ENCODE measurements at regions of chr17 and their contacts with region 1.

Region 1: GRCh38 chr17:46995841-46996571 is 17.0 kb upstream of the RPRML start:
- DNase-seq: no peak
- H3K4me3 ChIP-seq: no peak overlapping the region
- H3K27ac ChIP-seq: no peak overlapping the region
- H3K4me1 ChIP-seq: no peaks in the 10 kb centered on the region; a peak in 1 of 4 replicates
- H3K27me3 ChIP-seq: no peaks in the 10 kb centered on the region
- CTCF ChIP-seq: no peak
- EP300 ChIP-seq: no peak
- RAD21 ChIP-seq: no peak

Region 2: GRCh38 chr17:46949291-46950174 is 46.5 kb before region 1 on chr17:
- CTCF ChIA-PET with region 1: interaction called, 278 read pairs
- POLR2A ChIA-PET with region 1: no interaction called
- DNase-seq: no peak
- H3K4me3 ChIP-seq: no peak overlapping the region
- H3K27ac ChIP-seq: no peak overlapping the region
- H3K4me1 ChIP-seq: peaks cover under 1 to 21% of the 10 kb centered on the region in 2 experiments; a peak in 2 of 4 replicates
- H3K27me3 ChIP-seq: no peaks in the 10 kb centered on the region
- CTCF ChIP-seq: no peak
- EP300 ChIP-seq: no peak
- RAD21 ChIP-seq: no peak

Region 3: DNA sequence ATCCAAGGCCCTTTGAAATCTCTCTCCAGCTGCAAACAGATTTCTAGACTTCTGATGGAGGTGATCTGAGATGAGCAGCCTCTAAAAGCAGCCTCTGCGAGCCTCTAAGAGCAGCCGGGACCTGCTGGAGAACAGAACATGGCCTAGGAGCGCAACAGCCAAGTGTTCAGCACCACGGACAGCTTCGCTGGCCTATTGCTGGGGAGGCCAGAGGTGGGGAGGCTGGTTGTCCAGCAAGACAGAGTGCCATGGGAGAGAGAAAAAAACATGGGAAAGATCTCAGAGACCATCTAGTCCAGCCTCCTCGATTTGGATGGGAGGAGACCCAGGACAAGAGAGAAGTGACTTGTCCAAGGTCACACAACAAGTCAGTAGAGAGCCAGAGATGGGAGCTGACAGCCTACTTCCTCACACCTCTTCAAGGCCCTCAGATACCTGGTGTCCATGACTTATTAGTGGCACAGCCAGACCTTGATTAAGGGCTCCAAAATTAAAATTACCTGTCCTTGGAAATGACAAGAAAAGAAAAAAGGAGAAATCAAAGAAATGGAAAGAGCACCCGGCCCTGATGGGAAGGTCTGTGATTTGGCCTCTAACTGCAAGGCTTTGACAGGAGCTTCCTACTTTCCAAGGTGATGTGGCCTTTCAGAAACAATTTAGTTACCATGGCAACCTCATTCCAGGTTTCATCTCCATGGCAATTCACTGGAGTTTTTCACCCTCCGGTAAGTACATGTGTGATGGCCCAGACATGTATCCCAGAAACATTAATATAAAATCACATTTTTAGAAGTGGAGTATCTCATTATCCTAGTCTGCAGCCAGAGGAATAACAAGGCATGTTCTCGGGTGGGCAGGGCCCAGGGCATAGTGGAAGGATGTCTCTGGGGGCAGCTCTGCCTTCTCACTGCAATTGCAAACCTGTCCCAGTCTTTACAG is 31.4 kb before region 1 on chr17:
- CTCF ChIA-PET with region 1: interaction called, 11 read pairs
- POLR2A ChIA-PET with region 1: no interaction called
- DNase-seq: no peak
- H3K4me3 ChIP-seq: no peak overlapping the region
- H3K27ac ChIP-seq: no peak overlapping the region
- H3K4me1 ChIP-seq: peaks cover 0 to 2% of the 10 kb centered on the region in 2 experiments; a peak in 1 of 4 replicates
- H3K27me3 ChIP-seq: no peaks in the 10 kb centered on the region
- CTCF ChIP-seq: no peak
- EP300 ChIP-seq: no peak
- RAD21 ChIP-seq: no peak

Region 4: DNA sequence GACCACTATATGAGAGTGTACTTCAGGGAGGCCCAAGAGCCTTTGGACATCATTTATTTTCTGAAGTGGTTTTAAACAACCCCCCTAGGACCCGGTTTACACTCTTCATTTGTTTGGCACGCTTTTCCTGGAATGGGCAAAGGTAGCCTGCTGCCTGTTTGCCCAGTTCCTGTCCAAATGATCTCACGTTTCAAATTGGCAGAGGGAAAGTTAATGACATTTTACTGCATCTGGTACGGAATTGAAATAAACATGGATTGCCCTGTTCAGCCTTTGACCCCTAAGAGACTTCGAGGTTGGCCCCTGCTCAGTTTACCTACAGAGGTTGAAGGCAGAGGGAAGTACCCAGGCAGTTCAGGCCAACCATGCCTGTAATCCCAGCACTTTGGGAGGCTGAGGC is 11.1 kb before region 1 on chr17:
- CTCF ChIA-PET with region 1: interaction called, 29 read pairs
- POLR2A ChIA-PET with region 1: interaction called, 3 read pairs
- DNase-seq: no peak
- H3K4me3 ChIP-seq: no peak overlapping the region
- H3K27ac ChIP-seq: 0 out of 4 replicates have a peak overlapping the region, but pooled peaks of 1 of the 2 experiments have one; percentile 11
- H3K4me1 ChIP-seq: peaks cover 0 to 13% of the 10 kb centered on the region in 2 experiments; a peak in 1 of 4 replicates
- H3K27me3 ChIP-seq: no peaks in the 10 kb centered on the region; the same call in 1 of the 2 replicates
- CTCF ChIP-seq: no peak
- EP300 ChIP-seq: no peak
- RAD21 ChIP-seq: no peak

Measured in SK-N-SH (cell line).